AG04450 (cell line): ENCODE measurements at regions of chr2 and their contacts with region 1.

Region 1: DNA sequence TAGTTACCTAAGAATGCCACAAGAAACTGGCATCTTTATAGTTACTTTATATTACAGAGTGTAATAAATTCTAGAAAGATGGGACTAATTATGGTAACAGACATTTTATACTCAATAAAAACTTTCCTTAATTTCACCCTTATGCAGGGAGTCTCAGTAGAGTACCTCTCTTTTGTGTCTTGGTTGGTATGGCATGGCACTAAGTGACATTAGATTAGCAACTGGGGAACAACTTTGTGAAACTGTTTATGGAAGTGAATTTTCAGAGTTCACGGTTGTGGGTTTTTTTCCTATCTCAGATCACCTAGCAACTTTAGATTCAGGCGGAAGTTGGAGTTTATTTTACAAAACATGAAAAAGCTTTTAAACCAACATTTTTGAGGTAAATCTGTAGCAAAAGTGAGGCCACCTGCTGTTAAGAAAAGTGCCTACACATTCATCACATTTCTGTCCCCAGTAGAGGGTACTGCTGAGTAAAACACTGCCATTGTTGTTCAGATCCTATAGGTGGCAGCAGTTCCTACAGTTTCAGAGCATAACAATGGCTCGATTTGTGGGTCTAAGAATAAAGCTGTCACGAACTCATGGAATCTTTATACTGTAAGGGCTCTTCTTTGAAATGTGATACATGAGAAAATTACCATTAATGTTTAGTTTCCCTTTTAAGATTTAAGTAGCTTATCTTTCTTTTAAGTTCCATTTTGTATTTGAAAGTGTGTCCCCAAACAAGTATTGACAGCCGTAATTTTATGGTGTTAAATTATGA is 117.6 kb downstream of the CAMKMT start:
- DNase-seq: peak; percentile 71
- H3K4me3 ChIP-seq: no peak overlapping the region
- H3K27ac ChIP-seq: no peak overlapping the region
- H3K27me3 ChIP-seq: no peaks in the 10 kb centered on the region
- CTCF ChIP-seq: peak; percentile 100

Region 2: GRCh38 chr2:43927442-43927841 is 551.9 kb before region 1 on chr2:
- CTCF ChIA-PET with region 1: no interaction called
- POLR2A ChIA-PET with region 1: no interaction called
- DNase-seq: no peak
- H3K4me3 ChIP-seq: no peak overlapping the region
- H3K27ac ChIP-seq: no peak overlapping the region
- H3K27me3 ChIP-seq: no peaks in the 10 kb centered on the region
- CTCF ChIP-seq: no peak

Region 3: GRCh38 chr2:44285174-44285573 is 194.1 kb before region 1 on chr2:
- CTCF ChIA-PET with region 1: no interaction called
- POLR2A ChIA-PET with region 1: no interaction called
- DNase-seq: no peak
- H3K4me3 ChIP-seq: no peak overlapping the region
- H3K27ac ChIP-seq: no peak overlapping the region
- H3K27me3 ChIP-seq: peaks cover 22% of the 10 kb centered on the region
- CTCF ChIP-seq: no peak

Region 4: DNA sequence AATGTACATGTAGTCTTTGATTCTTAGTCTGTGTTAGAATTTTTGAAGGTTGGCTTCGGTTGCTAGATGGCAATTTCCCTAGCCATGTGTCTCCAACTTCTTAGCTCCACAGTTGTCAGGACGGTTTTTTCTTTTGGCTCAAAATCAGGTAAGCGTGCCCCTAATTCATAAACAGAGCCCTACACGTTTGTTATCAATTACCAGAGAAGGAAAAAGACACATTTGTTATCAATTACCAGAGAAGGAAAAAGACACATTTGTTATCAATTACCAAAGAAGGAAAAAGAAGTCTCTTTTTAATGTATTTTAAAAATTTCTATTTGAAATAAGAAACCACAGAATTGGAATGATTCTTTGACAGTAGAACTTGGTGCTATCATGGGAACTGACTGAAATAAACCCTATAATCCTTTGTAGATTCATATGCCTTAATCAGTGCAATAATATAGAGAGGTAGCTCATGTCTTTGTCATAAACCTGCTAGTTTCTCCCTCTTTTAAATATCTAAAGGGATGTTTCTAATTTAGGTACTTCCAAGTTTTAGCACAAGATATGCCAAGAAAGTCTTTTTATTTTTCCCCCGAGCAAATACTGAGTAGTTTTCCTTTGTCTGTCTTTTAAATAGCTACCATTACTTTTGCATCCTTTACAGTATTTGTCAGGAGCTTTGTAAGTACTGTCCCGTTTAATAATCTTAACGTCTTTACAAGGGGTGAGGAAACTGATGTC is 81.7 kb before region 1 on chr2:
- CTCF ChIA-PET with region 1: interaction called, 136 read pairs
- POLR2A ChIA-PET with region 1: interaction called, 6 read pairs
- DNase-seq: no peak
- H3K4me3 ChIP-seq: no peak overlapping the region
- H3K27ac ChIP-seq: no peak overlapping the region
- H3K27me3 ChIP-seq: no peaks in the 10 kb centered on the region
- CTCF ChIP-seq: no peak

Region 5: DNA sequence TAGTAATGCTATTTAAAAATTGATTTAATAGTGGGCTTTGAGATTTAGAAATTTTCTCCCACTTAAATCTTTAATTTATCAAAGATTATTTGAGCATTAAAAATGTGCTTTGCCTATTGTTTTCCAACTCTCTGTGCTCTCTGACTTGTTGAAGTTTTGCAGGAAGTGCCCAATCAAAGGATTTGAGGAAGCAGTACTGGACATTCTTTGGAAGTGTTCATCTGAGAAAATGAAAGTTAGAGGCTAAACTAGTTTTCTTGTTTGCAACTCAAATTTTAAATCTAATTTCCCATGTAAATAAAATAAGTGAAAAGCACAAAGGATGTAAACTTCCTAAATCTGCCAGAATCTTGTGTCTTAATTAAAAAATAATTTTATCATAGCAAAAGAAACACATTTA is 28.5 kb before region 1 on chr2:
- CTCF ChIA-PET with region 1: interaction called, 22 read pairs
- POLR2A ChIA-PET with region 1: no interaction called
- DNase-seq: no peak
- H3K4me3 ChIP-seq: no peak overlapping the region
- H3K27ac ChIP-seq: no peak overlapping the region
- H3K27me3 ChIP-seq: no peaks in the 10 kb centered on the region
- CTCF ChIP-seq: no peak

Region 6: GRCh38 chr2:44498551-44498950 is 19.2 kb after region 1 on chr2:
- CTCF ChIA-PET with region 1: interaction called, 114 read pairs
- POLR2A ChIA-PET with region 1: no interaction called
- DNase-seq: no peak
- H3K4me3 ChIP-seq: no peak overlapping the region
- H3K27ac ChIP-seq: no peak overlapping the region
- H3K27me3 ChIP-seq: no peaks in the 10 kb centered on the region
- CTCF ChIP-seq: no peak

Region 7: DNA sequence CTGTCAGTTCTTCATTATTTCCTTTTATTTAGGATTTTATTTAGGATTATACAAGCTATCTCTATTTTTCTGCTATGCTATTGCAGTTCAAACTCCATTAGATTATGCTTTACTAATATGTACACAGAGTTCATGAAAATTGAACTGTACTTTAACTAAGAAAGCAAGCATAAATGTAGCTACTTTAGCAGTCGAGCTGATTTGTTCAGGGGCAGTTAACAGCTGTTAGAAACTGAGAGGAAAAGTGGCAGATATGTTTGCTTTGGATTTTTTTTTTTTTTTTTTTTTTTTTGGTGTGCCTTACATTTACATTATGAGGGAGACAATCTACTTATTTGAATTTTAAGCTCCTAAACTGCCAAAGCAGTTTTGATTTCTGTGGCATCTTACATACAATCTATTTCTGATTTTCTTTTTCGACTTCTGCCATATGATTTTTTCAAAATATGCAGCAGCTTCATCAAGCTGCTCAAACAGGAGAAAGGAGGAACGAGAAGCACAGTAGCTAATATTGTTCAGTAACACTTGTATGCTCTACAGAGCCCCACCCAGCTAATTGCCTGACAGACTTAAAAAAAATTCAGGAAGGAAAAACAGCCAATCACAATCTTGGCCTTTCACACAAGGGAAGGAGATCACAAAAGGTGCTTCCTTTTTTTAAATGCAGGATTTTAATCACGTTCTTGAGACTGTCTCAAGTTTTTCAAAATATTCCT is 228.8 kb after region 1 on chr2:
- CTCF ChIA-PET with region 1: interaction called, 36 read pairs
- POLR2A ChIA-PET with region 1: no interaction called
- DNase-seq: no peak
- H3K4me3 ChIP-seq: no peak overlapping the region
- H3K27ac ChIP-seq: no peak overlapping the region
- H3K27me3 ChIP-seq: no peaks in the 10 kb centered on the region
- CTCF ChIP-seq: no peak

Region 8: DNA sequence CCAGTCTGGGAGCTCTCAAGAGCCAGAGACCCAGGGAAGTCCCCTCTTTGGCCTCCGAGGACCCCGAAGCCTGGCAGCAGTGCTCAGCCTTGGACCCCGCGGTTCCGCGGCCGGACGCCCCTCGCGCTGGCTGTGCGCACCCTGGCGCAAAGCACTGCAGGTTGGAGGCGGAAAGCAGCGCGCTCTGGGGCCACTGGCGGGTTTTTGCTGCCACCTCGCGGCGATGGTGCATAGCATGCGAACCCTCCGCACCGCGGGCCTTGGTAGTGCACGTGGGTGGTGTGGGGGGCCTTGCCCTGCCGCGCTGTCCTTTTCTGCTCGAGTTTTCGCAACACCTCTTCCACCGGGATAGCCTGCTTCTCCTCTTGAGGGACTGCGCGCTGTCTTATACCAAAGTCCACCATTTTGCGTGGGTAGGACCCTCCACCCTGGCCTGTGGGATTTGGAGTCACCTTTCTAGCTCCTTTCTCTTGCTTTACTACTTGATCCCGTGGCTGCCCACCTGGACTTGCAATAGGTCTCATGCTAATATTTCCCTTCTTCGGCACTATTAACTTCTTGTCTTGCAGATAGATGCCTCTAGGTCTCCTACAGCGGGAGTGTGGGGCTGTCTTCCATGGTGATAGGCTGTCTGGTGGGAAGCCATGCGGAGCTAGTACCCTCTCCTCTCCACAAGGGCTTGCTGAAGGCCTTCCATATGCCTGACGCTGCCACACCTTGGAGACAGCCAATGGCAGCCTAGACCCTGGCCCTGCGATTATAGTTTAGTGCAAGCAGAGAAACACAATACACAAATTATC is 476.5 kb after region 1 on chr2:
- CTCF ChIA-PET with region 1: interaction called, 135 read pairs
- POLR2A ChIA-PET with region 1: no interaction called
- DNase-seq: peak; percentile 18
- H3K4me3 ChIP-seq: 0 out of 2 replicates have a peak overlapping the region, but pooled peaks have one; percentile 4
- H3K27ac ChIP-seq: no peak overlapping the region
- H3K27me3 ChIP-seq: peaks cover 53% of the 10 kb centered on the region
- CTCF ChIP-seq: peak; percentile 85